Panc1 (cell line): ENCODE measurements at regions of chr1 and their contacts with region 1.

Region 1: GRCh38 chr1:229341774-229342655 is 832 bp downstream of the CCSAP start:
- DNase-seq: no peak
- ATAC-seq: peak; percentile 93
- H3K4me3 ChIP-seq: peak overlapping the region; percentile 70 to 83
- H3K27ac ChIP-seq: peak overlapping the region; percentile 86
- H3K4me1 ChIP-seq: peaks cover 24% of the 10 kb centered on the region
- H3K27me3 ChIP-seq: no peaks in the 10 kb centered on the region
- CTCF ChIP-seq: no peak

Region 2: GRCh38 chr1:229293528-229294204 is 48.3 kb before region 1 on chr1:
- CTCF ChIA-PET with region 1: no interaction called
- POLR2A ChIA-PET with region 1: no interaction called
- in situ Hi-C with region 1: no loop called
- intact Hi-C with region 1: no loop called
- DNase-seq: no peak
- ATAC-seq: no peak
- H3K4me3 ChIP-seq: no peak overlapping the region
- H3K27ac ChIP-seq: no peak overlapping the region
- H3K4me1 ChIP-seq: no peaks in the 10 kb centered on the region
- H3K27me3 ChIP-seq: no peaks in the 10 kb centered on the region
- CTCF ChIP-seq: no peak

Region 3: GRCh38 chr1:229408458-229409037 is 66.5 kb after region 1 on chr1:
- CTCF ChIA-PET with region 1: no interaction called
- POLR2A ChIA-PET with region 1: no interaction called
- in situ Hi-C with region 1: no loop called
- intact Hi-C with region 1: loop called (anchors 10 kb)
- DNase-seq: no peak
- ATAC-seq: peak; percentile 29
- H3K4me3 ChIP-seq: no peak overlapping the region
- H3K27ac ChIP-seq: no peak overlapping the region
- H3K4me1 ChIP-seq: peaks cover 12% of the 10 kb centered on the region
- H3K27me3 ChIP-seq: no peaks in the 10 kb centered on the region
- CTCF ChIP-seq: no peak

Region 4: GRCh38 chr1:229452956-229453801 is 111.2 kb after region 1 on chr1:
- CTCF ChIA-PET with region 1: no interaction called
- POLR2A ChIA-PET with region 1: interaction called, 4 read pairs
- in situ Hi-C with region 1: no loop called
- intact Hi-C with region 1: loop called (anchors 10 kb)
- DNase-seq: peak; percentile 2
- ATAC-seq: peak; percentile 77
- H3K4me3 ChIP-seq: no peak overlapping the region
- H3K27ac ChIP-seq: no peak overlapping the region
- H3K4me1 ChIP-seq: no peaks in the 10 kb centered on the region
- H3K27me3 ChIP-seq: no peaks in the 10 kb centered on the region
- CTCF ChIP-seq: peak; percentile 76

Region 5: DNA sequence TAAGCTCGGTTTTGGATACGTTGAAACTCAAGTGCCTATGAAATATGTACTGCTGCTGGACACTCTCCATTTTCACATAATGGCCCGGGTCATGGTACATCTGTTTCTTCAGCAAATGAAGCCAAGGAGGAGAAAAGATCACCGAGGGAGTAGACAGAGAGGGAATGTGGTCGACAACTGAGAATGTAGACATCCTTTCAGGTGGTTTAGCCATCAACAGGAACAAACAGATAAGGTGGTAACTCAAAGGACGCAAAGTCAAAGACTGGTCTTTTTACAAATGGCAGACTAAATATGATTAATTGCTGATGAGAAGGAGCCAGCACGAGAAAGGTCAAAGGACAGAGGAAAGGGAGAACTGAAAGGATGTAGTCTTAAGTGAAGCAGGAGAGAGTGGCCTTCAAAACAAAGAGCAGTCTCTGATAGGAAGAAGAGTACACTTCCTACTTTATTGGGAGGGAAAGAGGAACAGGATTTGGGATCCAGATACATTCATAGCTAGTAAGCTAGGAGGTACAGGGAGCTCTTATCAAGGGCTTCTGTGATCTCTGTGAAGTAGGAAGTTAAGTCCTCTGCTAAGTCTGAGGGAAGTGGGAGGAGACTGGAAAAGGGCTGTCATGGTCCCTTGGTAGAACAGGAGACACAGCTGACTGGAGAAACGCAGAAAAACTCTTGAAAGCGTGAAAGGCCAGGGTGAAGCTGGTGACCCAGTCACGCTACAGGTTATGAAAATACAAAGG is 137.8 kb after region 1 on chr1:
- CTCF ChIA-PET with region 1: no interaction called
- POLR2A ChIA-PET with region 1: no interaction called
- in situ Hi-C with region 1: no loop called
- intact Hi-C with region 1: loop called (anchors 10 kb)
- DNase-seq: no peak
- ATAC-seq: peak; percentile 30; the same call in 1 of the 2 replicates
- H3K4me3 ChIP-seq: no peak overlapping the region
- H3K27ac ChIP-seq: no peak overlapping the region
- H3K4me1 ChIP-seq: no peaks in the 10 kb centered on the region
- H3K27me3 ChIP-seq: no peaks in the 10 kb centered on the region
- CTCF ChIP-seq: no peak